Vagina (tissue), 2 donors: ENCODE measurements at regions of chr3 and their contacts with region 1.

Region 1: DNA sequence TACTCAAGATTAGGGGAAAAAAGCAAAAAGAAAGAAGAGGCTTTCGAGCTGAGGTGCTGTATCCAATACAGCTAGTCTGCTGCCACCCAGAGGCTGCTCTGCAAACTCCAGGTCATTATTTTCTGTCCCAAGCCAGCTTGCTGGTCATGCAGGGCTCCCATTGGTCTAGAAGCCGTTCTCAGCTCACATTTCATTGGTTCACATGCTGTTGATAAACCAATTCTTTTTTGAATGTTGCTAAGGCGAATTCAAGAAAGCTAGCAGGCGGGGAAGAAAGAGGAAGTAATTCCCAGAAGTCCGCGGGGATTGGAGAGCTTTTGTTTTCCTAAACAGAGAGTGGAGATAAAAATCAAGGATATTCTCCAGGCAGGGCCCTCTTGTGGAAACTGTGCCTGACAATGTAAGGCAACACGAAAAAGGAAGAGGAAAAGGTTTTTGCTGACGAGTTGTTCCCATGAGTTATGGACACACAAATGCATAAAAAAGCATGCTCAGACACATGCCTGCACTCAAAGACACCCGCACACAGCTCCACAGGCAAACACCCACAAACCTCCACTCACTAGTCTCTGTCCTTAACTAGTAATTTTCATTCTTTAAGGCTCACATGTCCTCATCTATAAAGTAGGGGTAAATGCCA is 33.4 kb downstream of the FSTL1 start:
- DNase-seq: peak in 1 of 2 donors; percentile 94
- H3K4me3 ChIP-seq: peak overlapping the region; percentile 3 to 13
- H3K27ac ChIP-seq: peak overlapping the region; percentile 76
- H3K4me1 ChIP-seq: peaks cover 54% of the 10 kb centered on the region
- H3K27me3 ChIP-seq: no peaks in the 10 kb centered on the region
- CTCF ChIP-seq: peak; percentile 59 to 89 (median 81)
- POLR2A ChIP-seq: no peak

Region 2: DNA sequence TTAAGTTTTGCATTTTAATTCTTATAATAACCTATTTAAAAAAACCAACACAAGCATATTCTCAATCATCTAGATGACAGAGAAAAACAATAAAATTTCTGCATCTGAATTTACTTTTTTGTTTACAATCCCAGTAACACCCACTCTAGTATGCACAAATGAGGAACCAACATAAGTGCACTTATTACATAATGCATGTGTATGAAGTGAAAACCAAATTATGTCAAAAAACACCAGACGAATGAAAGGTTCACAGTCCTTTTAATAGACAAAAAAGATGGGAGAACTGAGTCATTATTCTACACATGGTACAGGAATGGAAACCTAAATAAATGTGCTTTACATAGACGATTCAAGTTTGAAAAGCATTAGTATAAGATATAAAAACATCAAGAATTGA is 543.7 kb before region 1 on chr3:
- intact Hi-C with region 1: no loop called
- DNase-seq: no peak
- H3K4me3 ChIP-seq: no peak overlapping the region
- H3K27ac ChIP-seq: no peak overlapping the region
- H3K4me1 ChIP-seq: no peaks in the 10 kb centered on the region
- H3K27me3 ChIP-seq: no peaks in the 10 kb centered on the region
- CTCF ChIP-seq: no peak
- POLR2A ChIP-seq: no peak

Region 3: DNA sequence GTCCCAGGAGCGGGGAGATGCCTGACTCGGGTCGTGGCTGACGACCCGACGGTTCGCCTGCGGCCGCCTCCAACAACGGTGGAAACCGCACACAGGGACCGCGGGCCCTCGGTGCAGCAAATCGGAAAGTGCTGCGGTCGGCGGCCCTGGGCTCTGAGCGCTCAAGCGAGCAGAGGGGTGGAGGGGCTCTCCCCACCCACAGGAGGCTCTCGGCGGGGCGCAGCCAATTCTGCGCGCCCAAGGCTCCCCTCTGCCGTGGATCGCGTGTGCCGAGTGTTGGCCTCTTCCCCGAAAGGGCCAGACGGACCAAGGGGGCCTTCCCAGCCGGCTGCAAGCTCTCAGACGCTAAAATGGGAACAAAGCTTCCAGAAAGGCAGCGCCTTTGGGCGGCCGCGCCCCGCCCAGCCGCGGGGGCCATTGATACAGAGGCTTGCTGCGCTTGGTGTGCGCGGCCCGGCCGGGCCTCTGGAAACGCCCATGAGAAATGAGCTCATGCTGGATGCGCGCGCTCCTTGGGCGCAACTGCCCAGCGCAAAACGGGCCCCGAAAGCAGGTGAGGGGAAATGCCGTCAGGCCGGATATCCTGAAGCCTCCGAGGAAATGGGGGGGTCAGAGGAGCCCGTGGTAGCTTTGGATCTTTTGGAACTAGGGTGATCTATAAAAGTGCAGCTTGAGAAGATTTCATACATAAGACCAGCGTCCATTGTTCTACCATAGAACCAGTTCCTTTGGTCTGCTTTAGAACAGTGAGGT is 322.0 kb before region 1 on chr3:
- intact Hi-C with region 1: loop called (anchors 10 kb)
- DNase-seq: peak in 1 of 2 donors; percentile 96
- H3K4me3 ChIP-seq: peak overlapping the region; percentile 54 to 90
- H3K27ac ChIP-seq: peak overlapping the region; percentile 99
- H3K4me1 ChIP-seq: peaks cover 44% of the 10 kb centered on the region
- H3K27me3 ChIP-seq: no peaks in the 10 kb centered on the region
- CTCF ChIP-seq: no peak
- POLR2A ChIP-seq: peak in 1 of 2 donors; percentile 90

Region 4: GRCh38 chr3:120129718-120130513 is 287.5 kb before region 1 on chr3:
- intact Hi-C with region 1: no loop called
- DNase-seq: no peak
- H3K4me3 ChIP-seq: no peak overlapping the region
- H3K27ac ChIP-seq: no peak overlapping the region
- H3K4me1 ChIP-seq: no peaks in the 10 kb centered on the region
- H3K27me3 ChIP-seq: no peaks in the 10 kb centered on the region
- CTCF ChIP-seq: no peak
- POLR2A ChIP-seq: no peak

Region 5: DNA sequence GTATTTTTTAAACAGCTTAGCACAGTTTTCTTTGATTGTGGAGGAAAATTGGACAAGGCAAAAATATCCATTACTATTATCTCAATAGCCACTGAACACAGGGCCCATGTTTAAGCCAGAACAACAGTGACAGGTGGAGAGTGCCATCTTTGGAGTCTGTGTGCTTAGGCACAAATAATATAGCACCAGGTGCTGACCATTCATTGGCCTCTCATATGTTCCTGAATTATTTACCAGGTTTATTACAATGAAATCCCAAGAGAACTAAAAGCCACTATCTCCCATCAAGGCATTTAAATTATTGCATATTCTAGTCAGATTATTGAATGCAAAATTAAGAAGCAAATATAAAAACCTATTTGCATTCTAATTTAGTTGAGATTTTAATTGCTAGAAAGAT is 172.0 kb before region 1 on chr3:
- intact Hi-C with region 1: loop called (anchors 10 kb)
- DNase-seq: no peak
- H3K4me3 ChIP-seq: no peak overlapping the region
- H3K27ac ChIP-seq: no peak overlapping the region
- H3K4me1 ChIP-seq: no peaks in the 10 kb centered on the region
- H3K27me3 ChIP-seq: no peaks in the 10 kb centered on the region
- CTCF ChIP-seq: no peak
- POLR2A ChIP-seq: no peak

Region 6: DNA sequence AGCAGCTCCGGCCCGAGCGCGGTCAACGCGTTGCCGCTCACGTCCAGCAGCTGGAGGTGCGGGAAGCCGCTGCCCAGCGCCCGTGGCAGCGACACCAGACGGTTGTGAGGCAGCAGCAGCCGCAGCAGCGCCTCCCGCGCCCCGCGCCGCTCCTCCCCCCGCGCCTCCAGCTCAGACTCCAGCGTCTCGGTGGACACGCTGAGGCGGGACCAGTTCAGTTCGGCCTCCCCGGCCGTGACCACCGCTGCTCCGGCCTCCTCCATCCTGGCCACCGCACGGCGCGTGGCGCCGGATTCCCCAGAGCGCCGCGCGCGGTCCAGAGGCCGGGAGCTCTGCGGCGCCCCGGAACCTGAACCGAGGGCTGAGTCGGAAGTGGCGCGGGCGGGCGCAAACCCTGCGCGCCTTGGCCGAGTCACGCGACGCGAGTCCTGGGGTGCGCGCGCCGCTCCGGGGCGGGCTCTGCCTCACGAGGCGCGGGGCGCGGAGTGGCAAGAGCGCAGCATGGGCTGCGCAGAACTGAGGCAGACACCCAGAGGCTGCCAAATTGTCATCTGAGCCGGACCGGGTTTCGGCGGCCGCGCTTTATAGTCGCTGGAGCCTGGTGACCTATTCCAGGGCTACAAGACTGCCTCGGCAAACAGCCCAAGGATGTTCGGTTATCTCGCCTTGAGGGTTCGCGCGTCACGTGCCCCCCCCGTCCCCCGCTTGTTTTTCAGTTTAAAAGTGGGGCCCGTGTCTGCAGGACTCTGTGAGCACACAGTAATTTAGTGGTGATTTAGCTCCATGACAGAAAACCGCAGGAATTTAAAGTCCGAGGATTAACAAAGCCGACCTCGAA is 68.2 kb before region 1 on chr3 and contains the start of gene LRRC58:
- intact Hi-C with region 1: loop called (anchors 5 kb)
- DNase-seq: peak in 1 of 2 donors; percentile 93
- H3K4me3 ChIP-seq: peak within 1 kb of the TSS; percentile 65 to 76
- H3K27ac ChIP-seq: peak within 1 kb of the TSS; percentile 94
- H3K4me1 ChIP-seq: peaks cover 47% of the 10 kb centered on the region
- H3K27me3 ChIP-seq: no peaks in the 10 kb centered on the region
- CTCF ChIP-seq: peak in 1 of 3 experiments; percentile 19
- POLR2A ChIP-seq: peak in 1 of 2 donors; percentile 89
- total RNA-seq, gene LRRC58: 25.0 TPM

Region 7: DNA sequence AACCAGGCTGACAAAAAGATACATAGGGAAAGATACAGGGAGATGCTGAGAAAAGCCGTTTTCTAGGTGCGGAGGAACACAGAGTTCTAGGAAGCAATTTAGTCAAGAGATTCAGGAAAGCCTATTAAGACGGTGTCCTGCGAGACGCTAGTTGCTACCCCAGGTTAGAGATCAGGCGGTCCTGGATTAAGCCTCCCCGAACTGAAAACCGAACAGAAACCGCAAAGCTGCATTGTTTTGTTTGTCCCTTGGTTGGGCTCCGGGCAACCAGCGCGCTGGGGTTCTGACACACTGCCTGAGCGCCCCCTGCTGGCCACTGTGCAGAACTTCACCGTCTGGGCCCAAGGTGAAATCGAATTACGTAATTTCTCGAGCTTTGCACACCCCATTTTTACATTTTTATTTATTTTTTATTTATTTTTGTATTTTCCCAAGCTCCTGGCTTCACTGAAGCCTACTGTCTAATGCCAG is 141.4 kb after region 1 on chr3:
- intact Hi-C with region 1: loop called (anchors 5 kb)
- DNase-seq: no peak
- H3K4me3 ChIP-seq: peak overlapping the region; percentile 39 to 45
- H3K27ac ChIP-seq: peak overlapping the region; percentile 82
- H3K4me1 ChIP-seq: peaks cover 19% of the 10 kb centered on the region
- H3K27me3 ChIP-seq: no peaks in the 10 kb centered on the region
- CTCF ChIP-seq: peak; percentile 97 to 99 (median 98)
- POLR2A ChIP-seq: no peak

Region 8: DNA sequence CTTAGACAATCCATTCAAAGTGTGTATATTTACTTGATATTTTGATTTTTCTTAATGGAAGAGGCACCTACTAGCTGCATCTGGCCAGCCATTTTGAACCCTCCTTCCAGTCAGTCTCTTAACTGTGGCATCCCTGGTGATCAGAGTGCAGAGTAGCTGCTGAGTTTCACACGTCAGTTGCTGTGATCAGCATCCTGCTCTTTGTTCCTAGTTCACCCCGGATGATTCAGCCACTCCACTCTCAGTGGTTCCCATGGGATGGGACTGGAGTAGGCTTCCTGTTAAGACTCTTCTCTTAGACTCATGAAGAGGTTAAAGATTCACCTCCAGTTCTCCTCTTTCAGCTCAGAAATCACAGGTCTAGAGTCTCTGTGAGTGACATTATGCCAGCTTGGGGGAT is 566.4 kb after region 1 on chr3:
- intact Hi-C with region 1: no loop called
- DNase-seq: no peak
- H3K4me3 ChIP-seq: no peak overlapping the region
- H3K27ac ChIP-seq: no peak overlapping the region
- H3K4me1 ChIP-seq: no peaks in the 10 kb centered on the region
- H3K27me3 ChIP-seq: no peaks in the 10 kb centered on the region
- CTCF ChIP-seq: no peak
- POLR2A ChIP-seq: no peak